ENCODE measurements at regions of chr5 and their contacts with region 1.

Region 1: DNA sequence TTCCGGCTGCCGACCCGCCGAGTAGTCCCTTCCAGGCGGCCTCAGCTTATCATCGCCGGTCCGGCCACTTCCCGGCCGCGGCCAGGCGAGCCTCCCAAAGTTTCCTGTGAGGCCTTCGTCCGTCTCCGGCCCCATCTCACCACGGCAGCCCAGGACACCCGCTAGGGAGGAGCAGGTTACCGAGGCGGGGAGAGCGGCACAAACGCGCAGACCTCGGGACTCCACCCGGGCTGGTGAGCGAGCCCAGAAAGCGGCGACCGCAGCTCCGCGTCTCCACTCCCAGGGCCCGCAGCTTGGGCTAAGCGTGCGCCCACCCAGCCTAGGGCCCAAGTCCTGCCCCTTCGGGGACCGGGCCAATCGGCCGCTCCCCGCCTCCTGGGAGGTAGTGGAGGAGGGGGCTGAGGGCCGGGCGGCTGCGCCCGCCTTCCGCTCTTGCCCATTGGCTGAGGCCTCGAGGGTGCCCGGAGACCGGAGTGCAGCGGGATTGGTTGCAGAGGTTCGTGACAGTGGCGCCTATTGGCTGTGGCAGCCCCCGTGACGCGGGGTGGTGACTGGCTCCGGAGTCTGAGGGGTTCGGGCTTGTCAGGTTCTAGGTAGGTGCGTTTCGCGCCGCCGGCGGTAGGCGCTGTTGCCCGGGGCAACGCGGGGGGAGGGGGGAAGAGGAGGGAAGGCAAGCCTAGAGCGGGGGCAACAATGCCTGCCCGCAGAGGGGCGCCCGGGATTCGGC is 867 bp downstream of the FER start:
- DNase-seq: peak; percentile 95
- H3K4me3 ChIP-seq: peak overlapping the region; percentile 77
- CTCF ChIP-seq: peak; percentile 13

Region 2: GRCh38 chr5:108727651-108728565 is 20.7 kb before region 1 on chr5:
- CTCF ChIA-PET with region 1: interaction called, 3 read pairs
- POLR2A ChIA-PET with region 1: interaction called, 10 read pairs
- DNase-seq: no peak
- H3K4me3 ChIP-seq: peak overlapping the region; percentile 85
- CTCF ChIP-seq: no peak

Region 3: DNA sequence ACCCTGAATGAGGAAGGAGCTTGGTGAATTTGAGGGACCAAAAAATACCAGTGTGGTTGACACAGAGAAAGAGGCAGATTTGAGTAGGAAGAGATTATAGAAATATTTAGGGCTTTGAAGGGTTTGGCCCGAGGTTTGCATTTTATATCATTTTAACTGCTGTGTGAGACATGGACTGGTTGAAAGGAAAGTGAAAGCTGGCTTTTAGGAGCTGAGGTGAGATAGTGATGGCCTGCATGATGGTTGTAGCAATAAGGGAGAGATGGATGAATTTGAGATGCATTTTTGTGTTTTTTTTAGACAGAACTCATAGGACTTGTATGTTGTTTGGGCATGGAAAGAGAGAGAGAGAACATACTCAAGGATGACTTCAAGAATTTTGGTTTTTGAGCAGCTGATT is 20.8 kb after region 1 on chr5:
- CTCF ChIA-PET with region 1: no interaction called
- POLR2A ChIA-PET with region 1: no interaction called
- DNase-seq: no peak
- H3K4me3 ChIP-seq: no peak overlapping the region
- CTCF ChIP-seq: no peak